Activated T-helper 1 cell treated with anti-CD3 and anti-CD28 coated beads, Interleukin-12 subunit alpha, Interleukin-12 subunit beta, Interleukin-2, Interleukin-4 antibody, amounts not matched to agents 30 ng/mL and 10 ng/mL and 1 ng/mL, durations not matched to agents 14 hours and 24 hours and 36 hours (primary cell): ENCODE measurements at regions of chr19 and their contacts with region 1.

Region 1: DNA sequence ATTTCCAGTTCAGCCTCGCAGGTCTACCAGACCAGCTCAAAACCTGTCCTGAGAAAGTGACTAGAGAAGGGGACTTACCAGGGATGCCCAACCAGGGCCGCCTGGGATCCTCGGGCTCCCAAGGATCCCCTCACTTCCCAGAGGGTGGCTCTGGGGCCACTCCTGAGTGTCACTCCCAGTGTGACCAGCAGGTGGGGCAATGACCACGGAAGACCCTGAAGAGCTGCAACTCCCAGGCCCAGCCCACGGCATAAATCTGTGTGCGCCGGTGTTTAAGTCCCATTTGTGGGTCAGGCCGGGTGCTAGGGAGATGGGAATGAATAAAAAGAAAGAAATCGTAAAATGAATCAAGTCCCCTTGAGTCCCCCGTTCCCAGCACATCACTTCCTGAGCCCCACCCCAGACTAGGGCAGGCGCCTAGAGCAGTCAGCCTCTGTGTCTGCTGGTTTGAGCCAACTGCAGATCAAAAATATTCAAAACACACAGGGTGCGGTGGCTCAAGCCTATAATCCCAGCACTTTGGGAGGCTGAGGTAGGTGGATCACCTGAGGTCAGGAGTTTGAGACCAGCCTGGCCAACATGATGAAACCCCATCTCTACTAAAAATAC is 10.7 kb downstream of the PTGIR start:
- DNase-seq: peak; percentile 63
- H3K4me3 Mint-ChIP-seq: peak overlapping the region; percentile 64
- H3K27ac Mint-ChIP-seq: peak overlapping the region; percentile 92
- H3K4me1 Mint-ChIP-seq: peaks cover 74% of the 10 kb centered on the region
- H3K27me3 Mint-ChIP-seq: no peaks in the 10 kb centered on the region

Region 2: GRCh38 chr19:46529622-46530462 is 84.4 kb before region 1 on chr19:
- intact Hi-C with region 1: no loop called
- DNase-seq: peak; percentile 60
- H3K4me3 Mint-ChIP-seq: no peak overlapping the region
- H3K27ac Mint-ChIP-seq: no peak overlapping the region
- H3K4me1 Mint-ChIP-seq: peaks cover 15% of the 10 kb centered on the region
- H3K27me3 Mint-ChIP-seq: peaks cover 2% of the 10 kb centered on the region

Region 3: DNA sequence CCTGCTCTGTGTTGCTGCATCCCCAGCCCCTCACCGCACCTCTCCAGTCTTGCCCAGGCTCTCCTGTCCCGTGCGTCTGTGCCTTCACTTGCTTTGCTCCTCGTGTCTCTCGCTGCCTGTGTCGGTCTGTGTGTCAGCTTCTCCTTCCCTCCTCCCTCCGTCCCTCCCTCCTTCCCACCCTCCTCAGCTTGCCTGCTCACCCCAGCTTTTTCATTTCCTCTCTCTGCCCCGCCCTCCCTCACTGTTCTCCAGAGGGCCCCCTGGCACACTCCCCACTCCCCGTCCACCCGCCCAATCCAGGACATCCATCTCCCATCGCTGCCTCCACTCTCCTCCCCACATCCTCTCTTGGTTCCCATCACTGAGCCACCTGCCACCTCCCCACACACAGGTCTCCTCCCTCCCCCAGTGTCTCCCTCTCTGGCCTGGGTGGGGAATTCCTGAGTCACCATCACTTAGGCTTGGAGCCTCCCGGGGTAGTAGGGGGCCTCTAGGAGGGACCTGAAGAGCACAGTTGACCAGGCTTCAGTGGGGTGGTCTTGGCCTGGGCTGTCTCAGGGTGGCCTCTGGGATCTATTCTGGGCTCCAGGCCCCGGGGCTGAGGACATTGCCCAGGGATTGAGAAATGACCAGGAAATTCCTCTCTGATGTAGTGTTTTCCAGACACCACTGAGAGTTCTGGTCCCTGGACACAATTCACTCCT is 10.9 kb after region 1 on chr19 and contains the start of gene PTGIR:
- intact Hi-C with region 1: loop called (anchors 1 kb)
- DNase-seq: no peak
- H3K4me3 Mint-ChIP-seq: peak within 1 kb of the TSS; percentile 96
- H3K27ac Mint-ChIP-seq: peak within 1 kb of the TSS; percentile 98
- H3K4me1 Mint-ChIP-seq: peaks cover 39% of the 10 kb centered on the region
- H3K27me3 Mint-ChIP-seq: no peaks in the 10 kb centered on the region
- total RNA-seq, gene PTGIR: 217 and 218 TPM in 2 replicates

Region 4: DNA sequence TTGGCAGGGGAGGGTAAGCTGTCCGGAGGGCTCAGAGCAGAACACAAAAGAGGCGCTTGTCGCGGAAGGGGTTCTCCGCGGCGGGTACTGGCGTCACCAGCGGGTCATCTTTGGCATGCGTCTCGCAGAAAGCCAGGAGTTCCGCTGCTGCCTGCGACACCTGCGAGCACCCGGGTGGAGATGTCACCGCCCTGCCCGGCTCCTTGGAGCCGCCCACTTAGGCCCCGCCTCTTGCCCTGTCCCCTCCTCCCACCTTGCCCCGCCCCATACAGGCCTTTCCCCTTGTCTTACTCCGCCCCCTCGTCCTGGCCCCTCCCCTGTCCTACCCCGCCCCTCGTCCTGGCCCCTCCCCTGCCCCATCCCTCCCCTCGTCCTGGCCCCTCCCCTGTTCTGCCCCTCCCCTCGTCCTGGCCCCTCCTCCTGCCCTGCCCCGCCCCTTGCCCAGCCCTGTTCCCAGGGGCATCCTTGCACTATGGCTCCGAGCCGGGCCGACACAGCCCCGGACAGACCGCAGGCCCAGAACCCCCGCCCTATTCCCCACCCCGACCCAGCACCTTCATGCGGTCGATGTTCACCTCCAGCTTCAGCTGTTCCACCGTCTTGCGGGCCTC is 19.9 kb after region 1 on chr19:
- intact Hi-C with region 1: loop called (anchors 1 kb)
- DNase-seq: peak; percentile 94
- H3K4me3 Mint-ChIP-seq: peak overlapping the region; percentile 85
- H3K27ac Mint-ChIP-seq: peak overlapping the region; percentile 75
- H3K4me1 Mint-ChIP-seq: peaks cover 11% of the 10 kb centered on the region
- H3K27me3 Mint-ChIP-seq: peaks cover 2% of the 10 kb centered on the region